BJ (cell line): ENCODE measurements at regions of chr12 and their contacts with region 1.

Region 1: GRCh38 chr12:15590180-15590826 is 198.9 kb downstream of the EPS8 start:
- DNase-seq: no peak
- H3K4me3 ChIP-seq: peak overlapping the region; percentile 29
- H3K27me3 ChIP-seq: no peaks in the 10 kb centered on the region
- CTCF ChIP-seq: peak; percentile 88

Region 2: DNA sequence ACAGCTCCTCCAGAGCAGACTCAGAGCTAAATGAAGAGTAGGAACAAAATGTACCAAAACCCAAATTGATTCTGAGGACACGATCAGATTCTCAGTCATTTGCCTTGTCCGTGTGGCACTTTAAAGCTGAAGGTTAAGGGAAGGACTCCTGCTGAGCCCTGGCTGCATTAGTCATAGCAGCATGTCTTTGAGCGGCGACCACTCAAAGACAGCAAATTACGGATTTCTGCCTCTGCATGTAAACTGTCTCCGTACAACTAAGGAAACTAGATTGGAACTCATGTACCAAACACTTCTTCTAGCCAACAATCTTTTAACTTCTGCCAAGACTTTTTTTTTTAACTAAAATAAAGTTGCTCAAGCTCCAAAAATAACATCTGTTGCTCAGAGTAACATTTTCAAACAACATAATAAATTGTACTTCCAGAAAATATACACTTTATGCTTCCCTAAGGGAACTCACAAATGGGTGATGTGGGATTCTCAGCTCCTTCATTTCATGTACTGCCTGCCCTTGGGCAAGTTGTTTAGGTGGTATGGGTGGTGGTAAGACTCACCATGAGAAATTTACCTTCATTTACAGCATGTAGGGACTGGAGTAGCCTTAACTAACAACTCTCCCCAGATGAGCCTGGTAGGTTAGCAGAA is 425.2 kb before region 1 on chr12:
- CTCF ChIA-PET with region 1: no interaction called
- POLR2A ChIA-PET with region 1: no interaction called
- DNase-seq: no peak
- H3K4me3 ChIP-seq: no peak overlapping the region
- H3K27me3 ChIP-seq: no peaks in the 10 kb centered on the region
- CTCF ChIP-seq: no peak

Region 3: GRCh38 chr12:15574353-15574752 is 15.9 kb before region 1 on chr12:
- CTCF ChIA-PET with region 1: no interaction called
- POLR2A ChIA-PET with region 1: no interaction called
- DNase-seq: no peak
- H3K4me3 ChIP-seq: no peak overlapping the region
- H3K27me3 ChIP-seq: no peaks in the 10 kb centered on the region
- CTCF ChIP-seq: no peak

Region 4: DNA sequence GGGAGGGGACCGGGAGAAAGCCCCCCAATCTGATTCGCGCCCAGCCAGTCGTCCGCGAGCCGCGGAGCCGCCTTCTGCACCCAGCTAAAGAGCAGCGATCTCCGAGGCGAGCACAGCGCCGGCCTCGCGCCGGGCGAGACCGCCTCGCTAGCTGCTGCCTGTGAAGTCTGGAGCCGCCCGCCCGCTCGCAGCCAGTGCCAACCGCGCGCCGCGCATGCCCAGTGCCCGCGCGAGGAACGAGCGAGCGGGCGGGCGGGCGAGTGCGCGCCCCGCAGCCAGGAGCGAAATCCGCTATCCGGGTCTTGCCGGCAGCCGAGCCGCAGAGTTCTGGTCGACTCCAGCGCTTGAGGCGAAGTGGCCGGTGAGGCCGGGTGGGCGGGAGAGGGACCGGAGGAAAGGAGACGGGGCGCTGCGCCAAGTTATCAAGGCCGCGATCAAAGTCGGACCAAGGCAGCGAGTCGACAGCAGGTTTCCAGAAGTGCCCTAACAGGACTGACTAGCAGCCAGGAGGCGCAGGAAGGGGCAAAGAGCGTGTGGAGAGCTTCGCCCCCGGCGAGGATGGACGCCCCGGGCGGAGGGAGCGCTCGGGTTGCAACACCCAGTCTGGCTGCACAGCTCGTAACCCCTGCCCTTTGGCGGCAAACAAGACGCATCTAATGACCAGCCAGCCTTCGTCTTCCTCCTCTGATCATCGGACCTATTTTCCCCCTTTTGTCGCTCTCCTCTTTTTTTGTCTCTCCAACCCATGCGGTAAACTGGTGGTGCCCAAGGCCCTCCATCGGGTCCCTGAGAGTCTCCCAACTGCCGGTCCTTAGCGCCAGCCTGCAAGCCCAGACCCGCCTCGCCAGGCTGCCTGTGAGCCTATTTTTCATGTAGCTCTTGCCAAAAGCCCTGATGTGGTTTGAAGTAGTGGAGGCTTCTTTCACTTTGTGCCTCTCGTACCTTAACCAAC is 199.2 kb after region 1 on chr12 and contains the start of gene EPS8:
- CTCF ChIA-PET with region 1: interaction called, 10 read pairs
- POLR2A ChIA-PET with region 1: no interaction called
- DNase-seq: no peak
- H3K4me3 ChIP-seq: peak within 1 kb of the TSS; percentile 96
- H3K27me3 ChIP-seq: no peaks in the 10 kb centered on the region
- CTCF ChIP-seq: peak; percentile 18; the same call in 1 of the 2 replicates
- polyA plus RNA-seq, gene EPS8: 93.3 and 118 TPM in 2 replicates

Region 5: GRCh38 chr12:15846887-15847286 is 256.6 kb after region 1 on chr12:
- CTCF ChIA-PET with region 1: interaction called, 204 read pairs
- POLR2A ChIA-PET with region 1: no interaction called
- DNase-seq: peak; percentile 57
- H3K4me3 ChIP-seq: no peak overlapping the region
- H3K27me3 ChIP-seq: no peaks in the 10 kb centered on the region
- CTCF ChIP-seq: no peak